HEK293T (cell line): ENCODE measurements at regions of chr10 and their contacts with region 1.

Region 1: DNA sequence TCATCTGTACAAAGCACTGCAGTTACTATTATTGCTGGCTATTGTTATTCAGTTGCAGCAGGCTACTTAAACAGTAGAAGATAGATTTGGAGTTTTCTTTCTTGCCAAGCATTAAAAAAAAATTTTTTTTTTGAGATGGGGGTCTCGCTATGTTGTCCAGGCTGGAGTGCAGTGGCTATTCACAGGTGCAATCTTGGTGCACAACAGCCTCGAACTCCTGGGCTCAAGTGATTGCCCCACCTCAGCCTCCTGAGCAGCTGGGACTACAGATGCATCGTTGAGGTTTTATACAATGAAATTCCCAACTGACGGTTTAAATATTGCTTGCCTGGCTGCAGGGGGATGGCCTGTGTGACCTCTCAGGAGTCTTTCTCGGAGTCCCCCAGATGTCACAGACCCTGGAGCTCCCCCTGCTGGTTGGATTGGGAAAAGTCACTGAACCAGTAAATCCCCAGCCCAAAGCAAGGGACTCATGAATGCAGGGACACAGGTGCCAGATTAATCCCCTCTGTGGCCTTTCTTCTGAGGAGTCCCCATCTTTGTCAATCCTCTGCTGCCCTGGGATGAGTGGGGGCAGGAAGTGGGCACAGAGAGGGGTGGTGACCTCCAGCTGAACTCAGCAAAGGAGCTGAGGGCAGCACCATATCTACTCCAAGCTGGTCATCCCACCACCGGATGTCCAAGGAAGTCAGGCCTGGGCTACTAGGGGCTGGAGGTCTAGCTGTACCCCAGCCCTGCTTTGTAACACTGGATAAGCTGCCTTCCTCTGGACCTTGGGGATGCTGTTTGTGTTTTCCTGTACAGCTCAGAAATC is 149.6 kb downstream of the C10orf105 start:
- DNase-seq: peak; percentile 80

Region 2: GRCh38 chr10:71459513-71459912 is 110.5 kb before region 1 on chr10:
- CTCF ChIA-PET with region 1: no interaction called
- POLR2A ChIA-PET with region 1: no interaction called
- DNase-seq: no peak

Region 3: DNA sequence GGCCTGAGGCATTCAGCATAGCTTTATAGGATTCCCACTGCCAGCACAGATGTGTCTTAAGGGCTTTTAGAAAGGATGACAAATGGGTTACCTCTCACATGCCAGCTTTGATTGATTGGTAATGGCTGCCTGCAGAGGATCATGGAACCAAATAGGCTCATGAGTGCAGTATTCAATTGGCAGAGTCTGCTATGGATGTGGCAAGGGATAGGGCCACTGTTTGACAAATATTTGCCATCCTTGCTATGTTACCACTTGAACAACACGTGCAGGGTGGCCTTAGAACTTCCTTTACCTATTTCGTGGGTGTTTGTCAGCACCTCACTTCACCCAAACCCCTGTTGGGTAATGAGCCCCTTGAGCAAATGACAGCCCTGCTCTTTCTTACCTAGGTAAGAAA is 10.4 kb after region 1 on chr10:
- CTCF ChIA-PET with region 1: interaction called, 13 read pairs
- POLR2A ChIA-PET with region 1: no interaction called
- DNase-seq: no peak

Region 4: GRCh38 chr10:71587941-71588573 is 18.1 kb after region 1 on chr10:
- CTCF ChIA-PET with region 1: interaction called, 11 read pairs
- POLR2A ChIA-PET with region 1: no interaction called
- DNase-seq: no peak